MCF 10A (cell line): ENCODE measurements at regions of chr21 and their contacts with region 1.

Region 1: DNA sequence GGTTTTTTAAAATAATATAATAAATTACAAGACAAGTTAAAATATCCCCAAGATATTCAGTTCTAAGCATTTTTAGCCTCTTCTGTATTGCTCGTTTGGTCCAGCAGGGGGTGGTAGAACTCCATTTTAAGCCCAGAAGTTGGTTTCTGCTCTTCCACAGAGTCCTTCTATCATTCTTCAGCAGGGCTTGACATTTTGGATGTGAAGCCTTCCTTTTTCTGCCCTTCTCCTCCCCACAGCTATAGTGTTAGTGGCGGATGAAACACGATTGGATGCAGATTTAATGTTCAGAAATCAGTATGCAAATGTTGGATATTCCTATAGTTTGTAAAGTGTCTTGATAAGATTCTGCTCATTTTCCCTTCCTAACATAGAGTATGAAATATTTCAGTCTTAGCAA is 1.4 kb downstream of the NCAM2 start:
- DNase-seq: peak; percentile 48
- H3K4me3 Mint-ChIP-seq: no peak overlapping the region
- H3K27ac Mint-ChIP-seq: no peak overlapping the region
- H3K4me1 Mint-ChIP-seq: peaks cover 5% of the 10 kb centered on the region
- H3K27me3 Mint-ChIP-seq: no peaks in the 10 kb centered on the region
- CTCF ChIP-seq: peak; percentile 69

Region 2: GRCh38 chr21:20739421-20739820 is 260.2 kb before region 1 on chr21:
- CTCF ChIA-PET with region 1: no interaction called
- POLR2A ChIA-PET with region 1: no interaction called
- intact Hi-C with region 1: no loop called
- DNase-seq: peak; percentile 13
- H3K4me3 Mint-ChIP-seq: no peak overlapping the region
- H3K27ac Mint-ChIP-seq: no peak overlapping the region
- H3K4me1 Mint-ChIP-seq: peaks cover 14% of the 10 kb centered on the region
- H3K27me3 Mint-ChIP-seq: no peaks in the 10 kb centered on the region
- CTCF ChIP-seq: no peak

Region 3: DNA sequence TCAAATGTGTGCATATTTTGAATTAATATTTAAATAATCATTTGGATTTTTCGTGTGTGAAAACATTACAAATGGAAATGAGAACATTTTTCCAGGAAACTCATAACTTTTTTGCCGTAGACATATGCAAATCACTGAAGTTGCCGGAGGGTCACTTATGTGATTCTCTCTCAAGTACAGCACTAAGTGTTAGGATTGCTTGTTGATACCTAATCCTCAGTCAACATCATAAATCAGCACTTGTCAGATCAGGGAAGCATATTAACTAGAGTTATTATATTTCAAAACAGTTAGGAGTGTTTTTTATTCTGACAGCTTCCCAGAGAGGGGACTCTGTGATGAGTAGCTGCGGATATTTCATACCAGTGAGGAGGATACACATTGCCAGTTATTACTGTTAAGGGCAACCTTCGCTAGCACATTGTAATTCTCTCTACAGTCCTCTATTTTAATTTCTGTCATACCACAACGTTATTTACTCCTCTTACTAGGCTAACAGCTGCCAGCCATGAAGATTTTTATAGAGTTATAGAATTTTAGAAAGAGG is 40.0 kb after region 1 on chr21:
- CTCF ChIA-PET with region 1: no interaction called
- POLR2A ChIA-PET with region 1: no interaction called
- intact Hi-C with region 1: no loop called
- DNase-seq: no peak
- H3K4me3 Mint-ChIP-seq: no peak overlapping the region
- H3K27ac Mint-ChIP-seq: no peak overlapping the region
- H3K4me1 Mint-ChIP-seq: peaks cover 15% of the 10 kb centered on the region
- H3K27me3 Mint-ChIP-seq: no peaks in the 10 kb centered on the region
- CTCF ChIP-seq: no peak

Region 4: DNA sequence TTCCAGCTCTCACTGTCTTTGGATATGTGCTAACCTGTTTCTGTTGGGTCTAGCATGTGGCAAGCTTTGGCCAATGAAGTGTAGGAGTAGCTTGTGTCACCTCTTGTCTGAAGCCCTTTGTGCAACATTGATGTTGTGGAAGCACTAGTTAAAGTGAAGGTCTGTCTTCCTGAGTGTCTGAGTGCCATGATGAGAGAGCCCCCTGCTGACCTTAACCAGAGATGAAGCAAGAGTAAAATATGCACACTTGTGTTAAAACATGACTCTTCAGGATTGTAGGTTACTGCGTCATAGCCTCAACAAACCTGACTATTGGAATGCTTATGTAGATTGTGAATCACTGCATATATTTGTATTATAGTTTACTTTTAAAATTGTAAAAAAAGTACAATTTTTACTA is 102.3 kb after region 1 on chr21:
- CTCF ChIA-PET with region 1: interaction called, 3 read pairs
- POLR2A ChIA-PET with region 1: no interaction called
- intact Hi-C with region 1: loop called (anchors 5 kb)
- DNase-seq: peak; percentile 68
- H3K4me3 Mint-ChIP-seq: no peak overlapping the region
- H3K27ac Mint-ChIP-seq: no peak overlapping the region
- H3K4me1 Mint-ChIP-seq: no peaks in the 10 kb centered on the region
- H3K27me3 Mint-ChIP-seq: no peaks in the 10 kb centered on the region
- CTCF ChIP-seq: no peak